PC-9 (cell line): ENCODE measurements at regions of chr11 and their contacts with region 1.

Region 1: GRCh38 chr11:69873166-69874077 is 54.2 kb upstream of the FGF3 start:
- DNase-seq: no peak
- H3K4me3 ChIP-seq: no peak overlapping the region
- H3K27ac ChIP-seq: no peak overlapping the region
- H3K4me1 ChIP-seq: peaks cover 18% of the 10 kb centered on the region
- H3K27me3 ChIP-seq: no peaks in the 10 kb centered on the region
- CTCF ChIP-seq: no peak

Region 2: GRCh38 chr11:69883292-69884255 is 10.2 kb after region 1 on chr11:
- CTCF ChIA-PET with region 1: no interaction called
- POLR2A ChIA-PET with region 1: interaction called, 34 read pairs
- intact Hi-C with region 1: no loop called
- DNase-seq: peak in 1 of 2 experiments; percentile 22
- H3K4me3 ChIP-seq: no peak overlapping the region
- H3K27ac ChIP-seq: no peak overlapping the region
- H3K4me1 ChIP-seq: peaks cover 6% of the 10 kb centered on the region
- H3K27me3 ChIP-seq: no peaks in the 10 kb centered on the region
- CTCF ChIP-seq: no peak